ENCODE measurements at regions of chr10 and their contacts with region 1.

Region 1: GRCh38 chr10:101441541-101442455 is 87.8 kb downstream of the BTRC start:
- DNase-seq: peak; percentile 39
- ATAC-seq: peak; percentile 95
- H3K4me3 Mint-ChIP-seq: no peak overlapping the region
- H3K27ac Mint-ChIP-seq: no peak overlapping the region
- H3K4me1 Mint-ChIP-seq: peaks cover 2% of the 10 kb centered on the region
- H3K27me3 Mint-ChIP-seq: no peaks in the 10 kb centered on the region

Region 2: DNA sequence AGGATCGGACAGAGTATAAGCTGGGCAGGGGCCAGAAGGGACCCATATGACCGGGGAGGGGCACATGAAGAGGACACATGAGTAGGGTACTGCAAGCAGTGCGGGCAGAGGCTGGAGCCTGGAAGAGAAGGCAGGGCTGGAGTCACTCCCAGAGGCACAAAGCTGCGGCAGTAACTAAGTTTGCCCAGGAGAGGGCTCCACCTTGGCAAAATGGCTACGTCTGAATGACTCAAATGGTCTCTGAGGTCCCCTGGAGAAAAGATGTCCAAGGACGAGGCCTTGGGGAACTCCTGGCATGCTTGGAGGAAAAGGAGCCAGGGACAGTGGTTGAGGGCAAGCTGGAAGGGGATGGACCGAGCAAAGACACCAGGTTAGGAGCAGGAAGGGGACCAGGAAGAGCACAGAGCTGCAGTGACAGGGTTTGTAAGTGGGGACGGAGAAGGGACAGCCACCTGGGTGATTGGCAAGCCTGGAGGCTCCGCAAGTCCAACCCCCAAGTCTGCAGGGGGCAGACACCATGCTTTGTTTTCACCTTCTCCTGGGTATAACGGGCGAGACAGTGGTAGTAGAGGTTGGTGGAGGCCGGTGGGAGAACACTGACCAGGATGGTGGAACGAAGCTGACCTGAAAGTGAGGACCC is 169.4 kb before region 1 on chr10:
- CTCF ChIA-PET with region 1: interaction called, 30 read pairs
- POLR2A ChIA-PET with region 1: interaction called, 4 read pairs
- intact Hi-C with region 1: loop called in 1 of 2 experiments (anchors 1 kb)
- DNase-seq: peak; percentile 78
- ATAC-seq: peak; percentile 91
- H3K4me3 Mint-ChIP-seq: no peak overlapping the region
- H3K27ac Mint-ChIP-seq: no peak overlapping the region
- H3K4me1 Mint-ChIP-seq: peaks cover 2% of the 10 kb centered on the region
- H3K27me3 Mint-ChIP-seq: peaks cover 23% of the 10 kb centered on the region

Region 3: DNA sequence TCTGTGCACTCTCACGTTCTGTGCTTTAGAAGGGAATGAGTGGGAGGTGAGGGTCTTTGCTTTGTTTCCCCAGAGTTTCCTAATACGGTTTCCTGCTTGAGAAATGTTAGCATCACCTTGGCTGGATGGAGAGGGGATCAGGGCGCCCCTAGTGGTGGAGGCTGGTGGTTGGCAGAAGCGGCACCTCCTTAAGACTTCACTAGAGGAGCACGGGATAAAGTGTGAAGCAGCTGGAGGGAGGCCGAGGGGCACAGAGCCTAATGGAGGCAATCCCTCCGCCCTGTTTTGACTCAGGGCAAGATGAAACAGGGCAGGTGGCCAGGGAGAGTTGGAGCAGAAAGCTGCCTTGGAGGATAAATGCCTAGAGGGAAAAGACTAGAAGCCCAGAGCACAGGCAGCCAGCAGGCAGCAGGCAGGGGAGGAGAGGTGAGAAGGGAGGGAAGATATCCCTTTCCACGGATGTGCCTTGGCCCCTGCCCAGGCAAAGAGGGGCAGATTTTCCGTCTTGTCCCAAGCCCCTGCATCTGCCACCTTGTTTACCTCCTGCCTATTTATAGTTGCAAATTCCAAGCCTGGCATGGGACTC is 143.8 kb before region 1 on chr10:
- CTCF ChIA-PET with region 1: interaction called, 19 read pairs
- POLR2A ChIA-PET with region 1: no interaction called
- intact Hi-C with region 1: loop called (anchors 1 to 2 kb)
- DNase-seq: peak; percentile 89
- ATAC-seq: peak; percentile 90
- H3K4me3 Mint-ChIP-seq: no peak overlapping the region
- H3K27ac Mint-ChIP-seq: no peak overlapping the region
- H3K4me1 Mint-ChIP-seq: peaks cover 2% of the 10 kb centered on the region
- H3K27me3 Mint-ChIP-seq: peaks cover 41% of the 10 kb centered on the region

Region 4: GRCh38 chr10:101467286-101467770 is 25.5 kb after region 1 on chr10:
- CTCF ChIA-PET with region 1: interaction called, 15 read pairs
- POLR2A ChIA-PET with region 1: no interaction called
- intact Hi-C with region 1: no loop called
- DNase-seq: peak; percentile 23
- ATAC-seq: peak; percentile 96
- H3K4me3 Mint-ChIP-seq: no peak overlapping the region
- H3K27ac Mint-ChIP-seq: no peak overlapping the region
- H3K4me1 Mint-ChIP-seq: peaks cover 9% of the 10 kb centered on the region
- H3K27me3 Mint-ChIP-seq: no peaks in the 10 kb centered on the region

Measured in activated CD4-positive, alpha-beta T cell treated with anti-CD3 and anti-CD28 coated beads for 36 hours (primary cell).